Panc1 (cell line): ENCODE measurements at regions of chr5 and their contacts with region 1.

Region 1: DNA sequence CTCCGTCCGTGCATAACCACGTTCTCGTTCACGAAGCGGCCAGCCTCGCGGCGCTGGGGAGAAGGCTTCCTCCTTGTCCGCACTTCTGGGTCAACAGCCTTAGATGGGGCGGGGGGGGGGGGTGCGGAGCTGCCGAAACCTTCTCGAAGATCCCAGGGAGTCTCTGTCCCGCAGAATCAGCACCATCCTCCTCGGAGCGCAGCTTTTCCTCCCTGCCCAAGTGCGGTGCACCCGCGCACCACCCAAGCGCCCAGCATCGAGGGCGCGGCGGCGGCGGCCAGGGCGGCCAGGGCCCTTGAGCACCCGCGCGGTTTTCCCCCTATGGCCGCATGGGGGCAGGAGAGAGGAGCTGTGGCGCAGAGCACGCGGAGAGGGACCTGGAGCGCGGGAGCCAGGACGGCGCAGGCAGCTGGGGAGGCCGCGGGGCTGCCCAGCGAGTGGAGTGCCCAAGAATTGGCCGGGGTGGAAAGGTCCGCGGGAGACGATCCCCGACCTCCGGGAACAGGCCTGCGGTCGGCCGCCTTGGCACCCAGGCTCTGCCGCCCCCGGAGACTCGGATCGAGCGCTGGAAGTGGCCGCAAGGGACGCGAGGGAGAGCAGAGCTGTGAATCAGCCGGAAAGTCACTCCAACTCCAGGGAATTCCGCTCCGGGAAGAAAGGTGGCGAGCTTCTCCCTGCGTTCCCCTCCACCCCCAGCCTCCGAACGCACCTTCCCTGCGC is 43.1 kb downstream of the TMEM174 start:
- DNase-seq: peak; percentile 61
- ATAC-seq: peak; percentile 98
- H3K4me3 ChIP-seq: peak overlapping the region; percentile 47 to 67
- H3K27ac ChIP-seq: peak overlapping the region; percentile 84
- H3K4me1 ChIP-seq: peaks cover 10% of the 10 kb centered on the region
- H3K27me3 ChIP-seq: no peaks in the 10 kb centered on the region
- CTCF ChIP-seq: peak; percentile 97

Region 2: DNA sequence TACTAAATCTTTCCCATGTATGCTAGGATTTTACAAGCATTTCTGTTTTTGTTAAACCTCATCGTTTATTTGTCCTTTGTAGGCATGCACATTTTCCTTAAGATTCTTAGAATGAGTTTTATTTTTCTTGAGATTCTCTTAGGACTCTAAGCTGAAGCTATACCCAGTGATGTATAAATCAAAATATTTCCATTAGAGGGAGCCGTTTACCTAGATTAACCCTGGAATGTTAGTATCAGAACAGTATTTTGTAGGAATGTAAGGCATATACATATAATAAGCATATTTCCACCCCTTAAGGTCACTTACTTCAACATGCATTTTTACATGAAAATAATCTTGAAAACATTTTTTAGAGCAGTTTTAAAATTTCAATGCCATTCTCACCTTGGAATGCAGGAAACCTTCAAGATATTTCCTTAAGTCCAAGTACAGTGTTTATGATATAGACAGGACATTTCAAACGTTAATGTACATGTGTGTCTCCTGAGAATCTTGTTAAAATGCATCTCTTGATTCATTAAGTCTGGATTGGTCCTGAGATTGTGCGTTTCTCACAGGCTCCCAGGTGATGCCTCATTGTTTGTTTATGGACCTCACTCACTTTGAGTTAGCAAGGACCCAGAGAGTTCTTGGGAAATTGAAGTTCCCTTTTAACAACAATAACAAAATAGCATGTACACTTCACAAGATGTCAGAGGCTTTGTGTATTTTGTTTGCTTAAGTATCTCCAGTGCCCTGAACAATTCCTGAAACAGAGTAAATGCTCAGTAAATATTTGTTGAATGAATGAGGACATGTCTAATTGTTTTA is 295.2 kb before region 1 on chr5:
- CTCF ChIA-PET with region 1: no interaction called
- POLR2A ChIA-PET with region 1: no interaction called
- in situ Hi-C with region 1: no loop called
- intact Hi-C with region 1: loop called (anchors 10 kb)
- DNase-seq: peak; percentile 45
- ATAC-seq: peak; percentile 83
- H3K4me3 ChIP-seq: no peak overlapping the region
- H3K27ac ChIP-seq: no peak overlapping the region
- H3K4me1 ChIP-seq: peaks cover 5% of the 10 kb centered on the region; the same call in 1 of the 2 replicates
- H3K27me3 ChIP-seq: no peaks in the 10 kb centered on the region
- CTCF ChIP-seq: peak; percentile 56; the same call in 1 of the 2 replicates

Region 3: GRCh38 chr5:73135429-73136054 is 80.5 kb before region 1 on chr5:
- CTCF ChIA-PET with region 1: no interaction called
- POLR2A ChIA-PET with region 1: no interaction called
- in situ Hi-C with region 1: no loop called
- intact Hi-C with region 1: no loop called
- DNase-seq: no peak
- ATAC-seq: peak; percentile 82
- H3K4me3 ChIP-seq: no peak overlapping the region
- H3K27ac ChIP-seq: no peak overlapping the region
- H3K4me1 ChIP-seq: no peaks in the 10 kb centered on the region
- H3K27me3 ChIP-seq: no peaks in the 10 kb centered on the region
- CTCF ChIP-seq: peak; percentile 70

Region 4: DNA sequence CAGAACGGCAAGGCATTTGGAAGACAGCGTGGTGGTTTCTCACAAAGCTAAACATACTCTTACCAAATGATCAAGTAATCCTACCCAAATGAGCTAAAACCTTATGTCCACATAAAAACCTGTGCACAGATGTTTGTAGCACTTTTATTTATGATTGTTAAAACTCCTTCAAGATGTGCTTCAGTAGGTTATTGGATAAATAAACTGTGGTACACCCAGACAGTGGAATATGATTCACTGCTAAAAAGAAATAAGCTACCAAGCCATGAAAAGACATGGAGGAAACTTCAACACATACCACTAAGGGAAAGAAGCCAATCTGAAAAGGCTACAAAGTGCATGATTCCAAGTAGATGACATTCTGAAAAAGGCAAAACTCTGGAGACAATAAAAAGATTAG is 138.4 kb after region 1 on chr5:
- CTCF ChIA-PET with region 1: no interaction called
- POLR2A ChIA-PET with region 1: interaction called, 15 read pairs
- in situ Hi-C with region 1: no loop called
- intact Hi-C with region 1: no loop called
- DNase-seq: no peak
- ATAC-seq: no peak
- H3K4me3 ChIP-seq: no peak overlapping the region
- H3K27ac ChIP-seq: no peak overlapping the region
- H3K4me1 ChIP-seq: no peaks in the 10 kb centered on the region
- H3K27me3 ChIP-seq: no peaks in the 10 kb centered on the region
- CTCF ChIP-seq: no peak

Region 5: DNA sequence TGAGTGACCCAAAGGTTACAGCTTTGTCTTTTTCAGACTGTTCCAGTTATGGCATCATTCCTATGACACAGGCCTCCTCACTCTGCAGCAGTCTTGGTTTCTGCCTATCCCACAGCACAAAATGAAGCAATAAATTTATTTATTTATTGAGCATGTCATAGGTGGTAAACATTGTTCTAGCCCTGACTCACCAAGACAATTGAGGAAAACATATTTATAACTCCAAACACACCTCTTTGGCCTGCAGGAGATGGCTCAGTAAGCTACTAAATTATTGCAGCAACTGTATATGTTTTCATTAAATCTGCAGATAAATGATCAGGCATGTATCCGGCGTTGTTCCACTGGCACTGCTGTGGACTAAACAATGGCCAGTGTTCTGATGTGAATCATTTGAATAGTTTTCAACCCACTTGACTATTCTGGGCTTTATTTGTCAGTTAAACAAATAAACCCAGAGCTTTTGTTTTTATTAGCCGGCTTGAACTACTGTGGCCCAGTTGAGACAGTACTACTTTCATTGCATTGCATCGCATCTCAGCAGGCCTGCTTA is 149.3 kb after region 1 on chr5:
- CTCF ChIA-PET with region 1: interaction called, 9 read pairs
- POLR2A ChIA-PET with region 1: no interaction called
- in situ Hi-C with region 1: no loop called
- intact Hi-C with region 1: loop called (anchors 10 kb)
- DNase-seq: peak; percentile 98
- ATAC-seq: peak; percentile 88
- H3K4me3 ChIP-seq: peak overlapping the region in 1 of 2 experiments; percentile 17; a peak in 2 of 4 replicates
- H3K27ac ChIP-seq: peak overlapping the region; percentile 89
- H3K4me1 ChIP-seq: peaks cover 54% of the 10 kb centered on the region
- H3K27me3 ChIP-seq: no peaks in the 10 kb centered on the region
- CTCF ChIP-seq: no peak

Region 6: GRCh38 chr5:73437101-73437776 is 221.2 kb after region 1 on chr5:
- CTCF ChIA-PET with region 1: interaction called, 5 read pairs
- POLR2A ChIA-PET with region 1: interaction called, 5 read pairs
- in situ Hi-C with region 1: no loop called
- intact Hi-C with region 1: loop called (anchors 1 kb)
- DNase-seq: no peak
- ATAC-seq: peak; percentile 88
- H3K4me3 ChIP-seq: peak overlapping the region; percentile 39 to 65
- H3K27ac ChIP-seq: peak overlapping the region; percentile 98
- H3K4me1 ChIP-seq: peaks cover 58% of the 10 kb centered on the region
- H3K27me3 ChIP-seq: no peaks in the 10 kb centered on the region
- CTCF ChIP-seq: peak; percentile 89

Region 7: GRCh38 chr5:73448463-73449136 is 232.5 kb after region 1 on chr5 and contains the start of gene FOXD1:
- CTCF ChIA-PET with region 1: interaction called, 31 read pairs
- POLR2A ChIA-PET with region 1: interaction called, 3 read pairs
- in situ Hi-C with region 1: no loop called
- intact Hi-C with region 1: loop called (anchors 5 kb)
- DNase-seq: peak; percentile 86
- ATAC-seq: peak; percentile 91
- H3K4me3 ChIP-seq: peak within 1 kb of the TSS; percentile 61 to 83
- H3K27ac ChIP-seq: peak within 1 kb of the TSS; percentile 86
- H3K4me1 ChIP-seq: peaks cover 30% of the 10 kb centered on the region
- H3K27me3 ChIP-seq: no peaks in the 10 kb centered on the region
- CTCF ChIP-seq: 0 out of 2 replicates have a peak, but pooled peaks have one; percentile 20
- total RNA-seq, gene FOXD1: 63.3 TPM

Region 8: DNA sequence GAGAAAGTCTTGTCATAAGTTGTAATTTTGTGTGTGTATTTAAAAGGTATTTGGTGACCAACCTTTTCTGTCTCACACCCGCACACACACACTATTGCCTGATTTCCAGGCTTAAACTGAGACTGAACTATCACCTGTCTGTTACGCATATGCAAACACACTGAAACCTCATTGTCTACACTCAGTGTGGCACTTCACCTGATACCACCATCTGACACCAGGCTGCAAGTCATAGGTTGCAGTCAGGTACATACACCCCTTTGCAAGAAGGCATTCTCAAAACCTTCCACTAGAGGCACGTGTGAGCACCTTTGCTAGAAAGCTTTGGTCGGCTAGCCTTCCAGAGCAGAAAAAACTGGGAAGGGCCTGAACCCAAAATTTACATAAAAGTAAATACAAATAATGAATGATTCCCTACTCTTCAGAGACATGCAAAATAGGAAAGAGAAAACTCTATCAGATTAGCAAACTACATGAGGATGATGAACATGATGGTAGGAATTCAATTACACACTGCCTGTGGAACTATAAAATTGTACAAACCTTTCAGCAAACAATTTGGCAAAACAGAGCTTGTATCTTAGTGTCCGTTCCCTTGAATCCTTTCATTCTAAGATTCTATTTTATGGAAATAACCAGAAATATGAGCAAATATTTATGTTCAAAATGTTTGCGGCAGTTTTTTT is 238.4 kb after region 1 on chr5:
- CTCF ChIA-PET with region 1: interaction called, 31 read pairs
- POLR2A ChIA-PET with region 1: no interaction called
- in situ Hi-C with region 1: no loop called
- intact Hi-C with region 1: loop called (anchors 5 kb)
- DNase-seq: peak; percentile 77
- ATAC-seq: peak; percentile 67
- H3K4me3 ChIP-seq: no peak overlapping the region
- H3K27ac ChIP-seq: no peak overlapping the region
- H3K4me1 ChIP-seq: peaks cover 14% of the 10 kb centered on the region
- H3K27me3 ChIP-seq: no peaks in the 10 kb centered on the region
- CTCF ChIP-seq: peak; percentile 92